ENCODE measurements at regions of chr9 and their contacts with region 1.

Region 1: DNA sequence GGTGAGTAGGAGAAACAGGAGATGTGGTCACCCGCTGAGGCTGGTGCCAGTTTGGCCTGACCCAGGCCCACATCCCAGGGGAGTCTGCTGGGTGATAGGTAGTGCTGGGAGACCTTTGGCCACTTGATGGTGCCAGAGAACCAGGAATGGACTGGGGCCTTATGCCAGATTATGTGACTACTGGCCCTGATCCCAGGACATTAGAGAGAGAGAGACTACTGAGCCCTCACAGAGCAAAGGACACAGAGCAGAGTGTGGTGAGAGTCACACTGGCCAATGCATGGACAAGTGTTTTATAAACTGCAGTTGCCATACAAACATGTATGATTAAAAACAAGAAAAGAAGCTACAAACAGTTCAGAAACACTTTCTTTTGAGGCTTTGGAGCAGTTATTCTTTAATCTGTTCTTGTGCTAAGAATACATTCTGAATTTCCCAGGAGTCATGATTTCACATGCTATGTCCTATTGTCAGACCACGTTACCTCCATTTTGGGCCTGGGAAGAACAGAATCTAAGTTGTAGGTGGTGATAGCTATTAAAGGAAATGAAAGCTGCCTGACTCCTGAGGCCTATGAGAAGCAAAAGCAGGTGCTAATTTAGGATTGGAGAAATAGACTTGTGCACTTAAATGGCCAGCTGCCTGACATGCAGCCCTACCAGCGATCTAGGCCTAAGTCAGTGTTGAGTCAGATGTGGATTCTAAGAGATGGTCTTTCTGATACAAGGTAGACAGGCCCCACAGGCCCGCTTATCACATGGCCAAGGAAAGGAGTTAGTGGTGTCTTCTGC is 32.6 kb upstream of the TMOD1 start:
- DNase-seq: peak; percentile 56 to 85
- ATAC-seq: peak; percentile 95 to 98 (median 98)
- H3K4me3 ChIP-seq: no peak overlapping the region
- H3K27ac ChIP-seq: peak overlapping the region in 9 of 10 donors; percentile 17 to 72 (median 53)
- H3K4me1 ChIP-seq: peaks cover 0 to 24% (median 7%) of the 10 kb centered on the region in 9 donors
- H3K27me3 ChIP-seq: no peaks in the 10 kb centered on the region
- CTCF ChIP-seq: peak; percentile 58 to 95 (median 83)

Region 2: DNA sequence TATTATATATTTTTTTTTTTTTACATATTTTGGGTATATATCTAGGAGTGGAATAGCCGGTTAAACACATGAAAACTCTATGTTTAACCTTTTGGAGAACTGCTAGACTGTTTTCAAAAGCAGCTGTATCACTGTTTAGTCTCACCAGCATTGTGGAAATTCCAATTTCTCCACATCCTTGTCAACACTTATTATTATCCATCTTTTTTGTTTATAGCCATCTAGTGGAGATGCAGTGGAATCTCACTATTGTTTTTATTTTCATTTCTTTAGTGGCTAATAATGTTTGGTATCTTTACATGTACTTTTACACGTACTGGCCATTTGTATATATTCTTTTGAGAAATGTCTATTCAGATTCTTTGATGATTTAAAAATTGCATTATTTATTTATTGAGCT is 184.1 kb before region 1 on chr9:
- intact Hi-C with region 1: no loop called
- DNase-seq: no peak
- ATAC-seq: no peak
- H3K4me3 ChIP-seq: no peak overlapping the region
- H3K27ac ChIP-seq: no peak overlapping the region
- H3K4me1 ChIP-seq: no peaks in the 10 kb centered on the region
- H3K27me3 ChIP-seq: no peaks in the 10 kb centered on the region
- CTCF ChIP-seq: no peak

Region 3: DNA sequence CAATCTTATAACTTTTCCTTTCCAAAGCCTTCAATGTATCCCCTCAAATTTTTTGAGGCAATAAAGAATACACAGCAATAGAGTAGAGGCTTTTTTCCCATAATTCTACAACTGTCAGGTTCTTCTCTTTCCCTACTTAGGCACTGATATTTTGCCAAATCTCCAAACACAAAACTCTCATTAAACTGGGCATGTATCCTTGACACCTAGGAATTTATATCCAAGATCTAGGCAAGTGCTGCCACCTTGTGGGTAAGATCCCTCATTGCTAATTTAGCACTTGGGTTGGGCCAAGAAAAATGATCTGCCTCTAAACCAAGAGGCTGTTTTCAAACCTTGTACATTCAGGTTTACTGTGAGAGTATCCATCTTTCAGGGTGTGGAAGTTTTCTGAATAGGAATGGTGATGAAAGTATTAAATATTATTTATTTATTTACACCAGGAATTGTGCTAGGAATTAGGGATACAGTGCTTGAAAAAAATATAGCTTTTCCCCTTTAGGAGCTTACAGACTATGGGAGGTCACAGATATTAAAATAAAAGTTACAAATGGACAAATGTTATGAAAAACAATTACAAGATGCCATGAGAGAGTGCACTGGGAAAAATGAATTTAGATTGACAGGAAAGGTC is 146.7 kb after region 1 on chr9:
- intact Hi-C with region 1: loop called (anchors 1 to 10 kb)
- DNase-seq: peak in 1 of 2 donors; percentile 66
- ATAC-seq: peak; percentile 44 to 76 (median 66)
- H3K4me3 ChIP-seq: no peak overlapping the region
- H3K27ac ChIP-seq: peak overlapping the region in 1 of 10 donors; percentile 15
- H3K4me1 ChIP-seq: peaks cover 0 to 13% (median 7%) of the 10 kb centered on the region in 9 donors
- H3K27me3 ChIP-seq: no peaks in the 10 kb centered on the region
- CTCF ChIP-seq: peak; percentile 64 to 89 (median 85)

Region 4: DNA sequence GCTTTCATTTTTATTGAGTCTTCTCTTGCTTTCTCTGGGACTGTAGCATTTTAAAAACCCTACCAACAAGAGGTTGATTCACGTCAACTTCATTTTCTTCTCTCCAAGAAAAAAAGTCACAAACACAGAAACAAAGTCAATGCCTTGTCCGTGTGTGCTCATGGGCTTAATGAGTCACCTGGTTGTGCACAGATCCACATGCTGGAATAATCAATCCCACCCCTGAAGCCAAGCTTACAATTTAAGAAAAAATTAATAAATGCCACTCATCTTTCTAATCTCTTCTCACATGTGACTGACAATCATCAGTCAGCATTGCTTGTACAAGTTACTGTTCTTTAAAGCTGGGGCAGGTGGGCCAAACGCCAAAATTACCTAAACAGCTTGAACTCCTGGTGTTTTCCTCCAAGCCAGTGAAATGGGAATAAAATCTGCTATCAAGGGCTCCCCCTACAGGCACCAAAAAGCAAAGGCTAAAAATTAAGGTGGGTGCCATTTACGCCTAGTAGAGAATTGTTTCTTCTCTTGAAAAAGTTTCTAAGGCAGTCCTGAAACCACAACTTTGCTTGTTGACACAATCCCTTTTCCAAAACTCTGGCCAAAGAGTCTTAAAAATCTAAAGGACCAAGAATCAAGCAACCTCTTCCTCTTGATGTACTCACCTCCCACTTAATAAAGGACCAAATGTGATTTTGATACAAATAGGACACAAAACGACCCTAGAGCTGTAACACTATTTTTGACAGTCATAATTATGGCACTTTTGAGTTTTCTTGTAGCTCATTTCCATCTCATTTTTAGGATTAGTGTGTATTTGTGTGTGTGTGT is 432.1 kb after region 1 on chr9:
- intact Hi-C with region 1: loop called in 1 of 10 experiments (anchors 5 kb)
- DNase-seq: no peak
- ATAC-seq: peak in 1 of 8 donors; percentile 46
- H3K4me3 ChIP-seq: no peak overlapping the region
- H3K27ac ChIP-seq: no peak overlapping the region
- H3K4me1 ChIP-seq: peaks cover 0 to 32% (median 1%) of the 10 kb centered on the region in 9 donors
- H3K27me3 ChIP-seq: no peaks in the 10 kb centered on the region
- CTCF ChIP-seq: peak in 8 of 9 donors; percentile 48 to 75 (median 72)

Measured in heart right ventricle (tissue), 16 donors.